WTC11 (cell line): ENCODE measurements at regions of chr1 and their contacts with region 1.

Region 1: GRCh38 chr1:31548907-31549808 is 27.2 kb upstream of the TINAGL1 start:
- DNase-seq: peak; percentile 93
- ATAC-seq: peak; percentile 89
- H3K4me3 Mint-ChIP-seq: peak overlapping the region; percentile 81
- H3K27ac Mint-ChIP-seq: no peak overlapping the region
- H3K4me1 Mint-ChIP-seq: peaks cover 14% of the 10 kb centered on the region; the same call in 1 of the 2 replicates
- H3K27me3 Mint-ChIP-seq: no peaks in the 10 kb centered on the region
- CTCF ChIP-seq: peak; percentile 91

Region 2: GRCh38 chr1:31289021-31289420 is 260.1 kb before region 1 on chr1:
- CTCF ChIA-PET with region 1: no interaction called
- POLR2A ChIA-PET with region 1: no interaction called
- DNase-seq: no peak
- ATAC-seq: no peak
- H3K4me3 Mint-ChIP-seq: no peak overlapping the region
- H3K27ac Mint-ChIP-seq: no peak overlapping the region
- H3K4me1 Mint-ChIP-seq: no peaks in the 10 kb centered on the region
- H3K27me3 Mint-ChIP-seq: no peaks in the 10 kb centered on the region
- CTCF ChIP-seq: no peak

Region 3: DNA sequence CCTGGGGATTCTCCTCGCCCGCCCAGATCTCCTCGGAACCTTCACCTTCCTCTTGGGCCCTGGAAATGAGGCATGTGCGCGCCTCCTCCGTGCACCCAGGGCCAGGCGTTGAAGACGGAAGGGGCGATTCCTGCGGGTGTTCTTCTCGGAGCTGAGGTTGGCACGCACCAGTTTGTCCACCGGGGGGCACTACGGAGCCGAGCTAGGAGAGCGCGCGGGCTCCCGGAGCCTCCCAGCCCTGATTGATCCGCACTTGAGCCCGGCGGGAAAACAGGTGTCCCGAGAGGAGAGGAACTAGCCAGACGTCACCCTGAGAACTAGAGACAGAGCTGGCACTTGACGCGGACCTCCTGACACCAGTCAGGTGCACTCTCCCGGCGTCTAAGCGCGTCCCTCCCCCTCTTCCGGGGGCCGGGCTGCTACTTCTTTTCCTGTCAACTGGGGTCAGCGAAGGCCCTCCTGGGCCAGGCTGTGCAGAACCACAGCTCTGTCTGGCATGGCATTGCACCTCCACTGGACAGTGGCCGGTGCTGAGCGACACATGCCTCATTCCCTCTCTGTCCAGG is 154.4 kb before region 1 on chr1:
- CTCF ChIA-PET with region 1: interaction called, 58 read pairs
- POLR2A ChIA-PET with region 1: interaction called, 5 read pairs
- DNase-seq: peak; percentile 96
- ATAC-seq: peak; percentile 95
- H3K4me3 Mint-ChIP-seq: peak overlapping the region; percentile 63
- H3K27ac Mint-ChIP-seq: no peak overlapping the region
- H3K4me1 Mint-ChIP-seq: peaks cover 19% of the 10 kb centered on the region
- H3K27me3 Mint-ChIP-seq: peaks cover 9% of the 10 kb centered on the region
- CTCF ChIP-seq: peak; percentile 72

Region 4: DNA sequence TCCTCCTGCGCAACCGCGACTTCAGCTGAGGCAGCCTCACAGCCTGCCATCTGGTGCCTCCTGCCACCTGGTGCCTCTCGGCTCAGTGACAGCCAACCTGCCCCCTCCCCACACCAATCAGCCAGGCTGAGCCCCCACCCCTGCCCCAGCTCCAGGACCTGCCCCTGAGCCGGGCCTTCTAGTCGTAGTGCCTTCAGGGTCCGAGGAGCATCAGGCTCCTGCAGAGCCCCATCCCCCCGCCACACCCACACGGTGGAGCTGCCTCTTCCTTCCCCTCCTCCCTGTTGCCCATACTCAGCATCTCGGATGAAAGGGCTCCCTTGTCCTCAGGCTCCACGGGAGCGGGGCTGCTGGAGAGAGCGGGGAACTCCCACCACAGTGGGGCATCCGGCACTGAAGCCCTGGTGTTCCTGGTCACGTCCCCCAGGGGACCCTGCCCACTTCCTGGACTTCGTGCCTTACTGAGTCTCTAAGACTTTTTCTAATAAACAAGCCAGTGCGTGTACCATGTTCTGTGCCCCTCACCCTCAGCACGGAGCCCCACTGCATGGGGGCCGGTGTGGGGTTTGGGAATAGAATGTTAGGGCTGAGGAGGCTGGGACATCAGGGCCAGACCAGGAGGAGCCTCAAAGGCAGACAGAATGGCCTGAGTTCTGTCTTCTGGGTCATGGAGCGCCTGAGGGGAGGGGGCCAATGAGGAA is 114.8 kb before region 1 on chr1:
- CTCF ChIA-PET with region 1: interaction called, 12 read pairs
- POLR2A ChIA-PET with region 1: no interaction called
- DNase-seq: no peak
- ATAC-seq: peak; percentile 64
- H3K4me3 Mint-ChIP-seq: no peak overlapping the region
- H3K27ac Mint-ChIP-seq: no peak overlapping the region
- H3K4me1 Mint-ChIP-seq: peaks cover 8% of the 10 kb centered on the region
- H3K27me3 Mint-ChIP-seq: no peaks in the 10 kb centered on the region; the same call in 1 of the 2 replicates
- CTCF ChIP-seq: no peak

Region 5: DNA sequence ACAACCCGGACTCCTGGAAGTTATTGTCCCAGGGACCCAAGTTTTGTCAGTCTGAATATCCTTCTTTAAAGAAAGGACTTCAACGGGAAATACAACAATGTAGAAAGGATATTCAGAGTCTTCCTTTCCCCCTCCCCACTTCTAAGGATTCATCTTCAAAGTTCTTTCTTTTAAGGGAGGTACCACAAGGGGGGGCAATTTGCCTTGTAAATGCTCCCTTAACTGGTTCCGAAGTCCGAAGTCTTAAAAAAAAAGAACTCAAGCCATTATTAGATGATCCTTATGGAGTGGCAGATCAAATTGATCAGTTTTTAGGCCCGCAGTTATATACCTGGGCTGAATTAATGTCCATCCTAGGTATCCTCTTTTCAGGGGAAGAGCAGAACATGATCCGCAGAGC is 89.1 kb before region 1 on chr1:
- CTCF ChIA-PET with region 1: interaction called, 24 read pairs
- POLR2A ChIA-PET with region 1: no interaction called
- DNase-seq: no peak
- ATAC-seq: peak; percentile 63
- H3K4me3 Mint-ChIP-seq: no peak overlapping the region
- H3K27ac Mint-ChIP-seq: no peak overlapping the region
- H3K4me1 Mint-ChIP-seq: peaks cover 9% of the 10 kb centered on the region
- H3K27me3 Mint-ChIP-seq: peaks cover 17% of the 10 kb centered on the region
- CTCF ChIP-seq: no peak

Region 6: DNA sequence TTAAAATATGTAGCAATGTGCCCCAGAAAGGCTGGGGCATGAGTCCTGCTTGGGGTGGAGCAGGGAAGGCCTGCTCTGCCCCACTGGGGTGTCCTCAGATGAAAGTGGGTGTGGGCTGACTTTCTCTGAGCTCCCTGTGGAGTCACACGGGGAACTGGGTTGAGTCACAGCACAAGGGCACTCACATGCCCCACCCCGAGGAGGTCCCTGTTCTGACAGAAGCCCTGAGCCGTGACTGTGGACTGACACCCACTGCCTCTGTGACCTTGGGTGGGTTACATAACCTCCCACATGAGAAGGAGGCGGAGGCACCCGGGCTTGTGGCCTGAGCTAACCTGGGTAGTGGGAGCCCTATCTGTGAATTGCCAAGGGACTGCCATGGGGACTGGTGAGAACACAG is 25.4 kb before region 1 on chr1:
- CTCF ChIA-PET with region 1: interaction called, 11 read pairs
- POLR2A ChIA-PET with region 1: no interaction called
- DNase-seq: no peak
- ATAC-seq: no peak
- H3K4me3 Mint-ChIP-seq: no peak overlapping the region
- H3K27ac Mint-ChIP-seq: no peak overlapping the region
- H3K4me1 Mint-ChIP-seq: no peaks in the 10 kb centered on the region
- H3K27me3 Mint-ChIP-seq: no peaks in the 10 kb centered on the region; the same call in 1 of the 2 replicates
- CTCF ChIP-seq: no peak

Region 7: GRCh38 chr1:31577515-31578192 is 28.5 kb after region 1 on chr1:
- CTCF ChIA-PET with region 1: interaction called, 10 read pairs
- POLR2A ChIA-PET with region 1: no interaction called
- DNase-seq: no peak
- ATAC-seq: no peak
- H3K4me3 Mint-ChIP-seq: peak overlapping the region; percentile 35
- H3K27ac Mint-ChIP-seq: no peak overlapping the region
- H3K4me1 Mint-ChIP-seq: peaks cover 32% of the 10 kb centered on the region
- H3K27me3 Mint-ChIP-seq: no peaks in the 10 kb centered on the region; the same call in 1 of the 2 replicates
- CTCF ChIP-seq: no peak

Region 8: GRCh38 chr1:31715087-31715872 is 166.1 kb after region 1 on chr1:
- CTCF ChIA-PET with region 1: interaction called, 11 read pairs
- POLR2A ChIA-PET with region 1: no interaction called
- DNase-seq: peak; percentile 99
- ATAC-seq: peak; percentile 92
- H3K4me3 Mint-ChIP-seq: peak overlapping the region; percentile 92
- H3K27ac Mint-ChIP-seq: peak overlapping the region; percentile 98
- H3K4me1 Mint-ChIP-seq: peaks cover 22% of the 10 kb centered on the region
- H3K27me3 Mint-ChIP-seq: peaks cover 4% of the 10 kb centered on the region
- CTCF ChIP-seq: peak; percentile 75

Region 9: DNA sequence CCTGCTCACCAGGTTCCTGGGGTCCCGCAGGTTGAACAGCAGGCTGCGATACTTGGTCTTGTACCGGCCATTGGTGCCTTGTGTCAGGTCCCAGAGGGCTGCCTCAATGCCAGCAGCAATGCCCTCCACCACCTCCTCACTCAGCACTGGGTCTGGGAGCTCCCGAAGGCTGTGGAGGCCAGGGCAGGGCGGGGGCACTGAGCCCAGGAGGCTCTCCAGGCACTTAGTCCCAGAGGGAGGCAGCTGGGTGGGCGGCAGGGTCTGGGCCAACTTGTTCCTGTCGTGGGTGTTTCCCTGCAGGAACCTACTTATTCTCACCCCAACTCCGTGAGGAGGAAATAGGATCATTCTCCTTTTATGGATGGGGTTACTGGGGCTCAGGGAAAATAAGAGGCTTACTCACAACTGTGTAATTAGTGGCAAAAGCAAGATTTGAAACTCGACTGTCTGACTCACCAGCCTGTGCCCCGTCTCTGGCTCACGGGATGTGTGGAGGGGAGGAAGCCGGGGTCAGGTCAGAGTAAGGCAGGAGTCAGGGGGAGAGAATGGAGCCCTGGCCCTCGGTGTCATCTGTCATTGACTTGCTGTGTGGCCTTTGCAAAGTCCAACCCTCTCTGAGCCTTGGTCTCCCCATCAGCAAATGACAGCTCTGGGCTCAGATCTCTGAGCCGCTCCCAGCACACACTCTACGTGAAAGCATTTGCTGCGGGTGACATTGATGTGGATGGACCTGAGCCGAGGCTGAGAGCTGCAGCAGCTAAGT is 249.5 kb after region 1 on chr1:
- CTCF ChIA-PET with region 1: no interaction called
- POLR2A ChIA-PET with region 1: no interaction called
- DNase-seq: no peak
- ATAC-seq: no peak; the same call in 1 of the 2 replicates
- H3K4me3 Mint-ChIP-seq: no peak overlapping the region
- H3K27ac Mint-ChIP-seq: no peak overlapping the region
- H3K4me1 Mint-ChIP-seq: peaks cover 32% of the 10 kb centered on the region
- H3K27me3 Mint-ChIP-seq: no peaks in the 10 kb centered on the region
- CTCF ChIP-seq: no peak